Natural killer cell (primary cell): ENCODE measurements at regions of chr16 and their contacts with region 1.

Region 1: DNA sequence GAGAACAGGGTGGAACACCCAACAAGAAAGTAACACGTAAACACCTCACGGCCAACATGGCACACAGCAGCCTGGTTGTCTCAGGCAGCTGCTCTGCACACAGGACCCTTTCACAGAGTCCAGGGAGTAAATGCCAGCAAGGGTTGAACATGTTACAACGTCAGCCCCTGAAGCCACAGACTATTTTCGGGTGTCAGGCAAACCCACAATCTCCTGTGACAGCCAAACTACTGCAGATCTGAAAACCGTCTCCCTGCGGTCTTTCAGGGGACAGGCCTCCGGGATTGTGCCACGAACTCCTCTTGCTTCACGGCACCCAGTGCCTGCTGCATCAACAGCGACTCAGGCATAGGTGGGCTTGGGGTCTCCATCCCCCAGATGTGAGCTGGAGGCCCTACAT is 127.7 kb downstream of the XYLT1 start:
- DNase-seq: peak; percentile 66 to 81
- ATAC-seq: peak; percentile 50 to 77 (median 71)
- H3K4me3 ChIP-seq: no peak overlapping the region
- H3K4me3 Mint-ChIP-seq: peak overlapping the region; percentile 93
- H3K27ac ChIP-seq: peak overlapping the region; percentile 64
- H3K27ac Mint-ChIP-seq: peak overlapping the region; percentile 94 to 96
- H3K4me1 ChIP-seq: peaks cover 74% of the 10 kb centered on the region
- H3K4me1 Mint-ChIP-seq: peaks cover 77 to 81% of the 10 kb centered on the region in 2 donors
- H3K27me3 ChIP-seq: no peaks in the 10 kb centered on the region
- H3K27me3 Mint-ChIP-seq: no peaks in the 10 kb centered on the region
- CTCF ChIP-seq: no peak

Region 2: DNA sequence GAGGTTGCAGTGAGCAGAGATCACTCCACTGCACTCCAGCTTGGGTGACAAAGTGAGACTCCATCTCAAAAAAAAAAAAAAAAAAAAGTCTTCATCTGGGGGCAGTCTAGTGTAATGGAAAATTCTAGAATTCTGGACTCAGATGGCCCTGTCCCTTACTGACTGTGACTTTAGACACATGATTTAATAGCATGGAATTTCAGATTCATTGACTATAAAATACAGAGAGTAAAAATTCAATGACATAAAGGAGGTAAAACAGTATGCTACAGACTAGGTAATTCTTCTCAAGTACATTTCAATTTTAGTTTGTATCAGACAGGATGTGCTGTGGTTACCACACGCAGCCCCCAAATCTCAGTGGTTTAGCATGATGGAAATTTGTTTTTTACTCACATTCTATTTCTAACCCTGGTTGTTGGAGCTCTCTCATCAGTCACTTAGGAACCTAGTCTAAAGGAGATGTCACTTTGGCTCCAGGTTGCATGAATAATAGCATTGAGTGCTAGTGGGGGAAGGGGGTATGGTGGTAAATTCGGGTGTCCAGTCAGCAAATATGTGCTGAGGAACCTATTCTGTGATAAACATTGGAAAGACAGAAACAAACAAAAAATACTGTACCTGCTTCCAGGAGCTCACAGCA is 316.3 kb before region 1 on chr16:
- intact Hi-C with region 1: loop called (anchors 5 kb)
- DNase-seq: peak; percentile 47 to 64
- ATAC-seq: peak; percentile 67 to 88 (median 78)
- H3K4me3 ChIP-seq: no peak overlapping the region
- H3K4me3 Mint-ChIP-seq: peak overlapping the region; percentile 81
- H3K27ac ChIP-seq: peak overlapping the region; percentile 56
- H3K27ac Mint-ChIP-seq: peak overlapping the region; percentile 75 to 76
- H3K4me1 ChIP-seq: peaks cover 21% of the 10 kb centered on the region
- H3K4me1 Mint-ChIP-seq: peaks cover 41% of the 10 kb centered on the region in 2 donors
- H3K27me3 ChIP-seq: no peaks in the 10 kb centered on the region
- H3K27me3 Mint-ChIP-seq: peaks cover 0 to 17% of the 10 kb centered on the region in 2 donors
- CTCF ChIP-seq: no peak

Region 3: GRCh38 chr16:17364319-17365210 is 21.5 kb after region 1 on chr16:
- intact Hi-C with region 1: loop called (anchors 1 kb)
- DNase-seq: peak in 1 of 2 donors; percentile 92
- ATAC-seq: peak; percentile 46 to 64 (median 59)
- H3K4me3 ChIP-seq: no peak overlapping the region
- H3K4me3 Mint-ChIP-seq: peak overlapping the region; percentile 52
- H3K27ac ChIP-seq: peak overlapping the region; percentile 66
- H3K27ac Mint-ChIP-seq: peak overlapping the region; percentile 96 to 99
- H3K4me1 ChIP-seq: peaks cover 85% of the 10 kb centered on the region
- H3K4me1 Mint-ChIP-seq: peaks cover 89% of the 10 kb centered on the region in 2 donors
- H3K27me3 ChIP-seq: no peaks in the 10 kb centered on the region
- H3K27me3 Mint-ChIP-seq: no peaks in the 10 kb centered on the region
- CTCF ChIP-seq: no peak

Region 4: GRCh38 chr16:17416461-17417311 is 73.7 kb after region 1 on chr16:
- intact Hi-C with region 1: loop called (anchors 5 kb)
- DNase-seq: peak; percentile 23 to 78
- ATAC-seq: peak; percentile 89 to 94 (median 90)
- H3K4me3 ChIP-seq: peak overlapping the region; percentile 11
- H3K4me3 Mint-ChIP-seq: peak overlapping the region; percentile 90
- H3K27ac ChIP-seq: peak overlapping the region; percentile 51
- H3K27ac Mint-ChIP-seq: peak overlapping the region; percentile 84 to 90
- H3K4me1 ChIP-seq: peaks cover 50% of the 10 kb centered on the region
- H3K4me1 Mint-ChIP-seq: peaks cover 60 to 64% of the 10 kb centered on the region in 2 donors
- H3K27me3 ChIP-seq: no peaks in the 10 kb centered on the region
- H3K27me3 Mint-ChIP-seq: no peaks in the 10 kb centered on the region
- CTCF ChIP-seq: peak; percentile 39

Region 5: DNA sequence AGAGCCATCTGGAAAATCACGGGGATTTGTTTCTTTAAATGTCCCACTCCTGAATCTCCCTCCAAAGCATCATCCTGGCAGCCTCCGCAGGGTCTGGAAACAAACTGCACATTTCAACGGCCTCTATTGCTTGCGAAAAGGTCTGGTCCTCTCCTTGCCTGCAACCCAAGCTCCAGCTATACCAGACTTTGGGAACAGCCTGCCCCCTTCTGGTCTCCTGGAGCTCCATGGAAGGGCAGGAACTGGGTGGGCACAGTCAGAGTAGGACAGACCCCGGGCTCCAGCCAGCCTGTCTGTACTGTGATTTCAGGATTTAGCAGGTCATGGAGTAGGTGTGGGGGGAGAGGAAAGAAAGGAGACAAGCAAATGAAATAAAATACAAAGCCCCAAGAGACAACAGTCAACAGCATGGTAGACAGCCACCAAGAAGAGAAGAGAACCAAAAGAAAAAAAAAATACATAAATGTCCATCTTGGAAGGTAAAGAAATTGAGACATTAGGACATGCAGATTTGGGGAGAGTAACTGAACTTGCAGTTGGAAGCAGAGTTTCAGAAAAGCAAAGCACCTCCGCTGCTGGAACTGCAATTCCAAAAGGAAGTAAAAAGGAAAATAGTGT is 125.0 kb after region 1 on chr16:
- intact Hi-C with region 1: loop called (anchors 5 kb)
- DNase-seq: peak in 1 of 2 donors; percentile 66
- ATAC-seq: peak in 1 of 3 donors; percentile 30
- H3K4me3 ChIP-seq: no peak overlapping the region
- H3K4me3 Mint-ChIP-seq: peak overlapping the region; percentile 93
- H3K27ac ChIP-seq: no peak overlapping the region
- H3K27ac Mint-ChIP-seq: peak overlapping the region in 1 of 2 donors; percentile 85
- H3K4me1 ChIP-seq: peaks cover 34% of the 10 kb centered on the region
- H3K4me1 Mint-ChIP-seq: peaks cover 52 to 54% of the 10 kb centered on the region in 2 donors
- H3K27me3 ChIP-seq: no peaks in the 10 kb centered on the region
- H3K27me3 Mint-ChIP-seq: no peaks in the 10 kb centered on the region
- CTCF ChIP-seq: no peak